ENCODE measurements at regions of chr10 and their contacts with region 1.

Region 1: GRCh38 chr10:121927841-121928527 is at the start of gene ATE1:
- DNase-seq: peak; percentile 62 to 95
- H3K4me3 ChIP-seq: peak within 1 kb of the TSS; percentile 98 to 100
- H3K27ac ChIP-seq: peak within 1 kb of the TSS; percentile 97
- H3K4me1 ChIP-seq: peaks cover 0 to 10% of the 10 kb centered on the region in 2 donors
- H3K27me3 ChIP-seq: no peaks in the 10 kb centered on the region
- CTCF ChIP-seq: no peak
- total RNA-seq, gene ATE1: 6.9 TPM

Region 2: DNA sequence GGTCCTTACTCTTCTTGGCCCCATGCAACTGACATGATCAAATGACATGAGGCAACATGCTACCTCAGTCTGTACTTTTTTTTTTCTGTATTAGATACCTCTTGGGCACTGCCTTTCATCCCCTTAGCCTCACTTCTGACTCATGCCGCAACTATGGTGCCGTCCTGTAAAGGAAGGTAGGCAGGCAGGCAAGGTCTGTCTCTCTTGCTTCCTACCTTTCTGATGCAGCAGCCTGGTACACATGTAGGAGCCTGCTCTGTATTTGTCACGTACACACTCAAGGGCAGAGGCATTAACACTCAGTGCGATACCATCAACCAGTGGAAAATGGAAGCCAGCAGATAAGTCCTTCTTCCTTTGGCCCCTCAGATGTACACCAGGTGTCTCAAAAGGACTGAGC is 146.9 kb before region 1 on chr10:
- intact Hi-C with region 1: no loop called
- DNase-seq: no peak
- H3K4me3 ChIP-seq: no peak overlapping the region
- H3K27ac ChIP-seq: no peak overlapping the region
- H3K4me1 ChIP-seq: no peaks in the 10 kb centered on the region
- H3K27me3 ChIP-seq: no peaks in the 10 kb centered on the region
- CTCF ChIP-seq: no peak

Region 3: GRCh38 chr10:121886997-121887622 is 40.9 kb before region 1 on chr10:
- intact Hi-C with region 1: no loop called
- DNase-seq: no peak
- H3K4me3 ChIP-seq: no peak overlapping the region
- H3K27ac ChIP-seq: no peak overlapping the region
- H3K4me1 ChIP-seq: no peaks in the 10 kb centered on the region
- H3K27me3 ChIP-seq: no peaks in the 10 kb centered on the region
- CTCF ChIP-seq: peak in 2 of 3 experiments; percentile 49 to 60

Region 4: GRCh38 chr10:121947343-121948330 is 19.7 kb after region 1 on chr10:
- intact Hi-C with region 1: no loop called
- DNase-seq: no peak
- H3K4me3 ChIP-seq: no peak overlapping the region
- H3K27ac ChIP-seq: no peak overlapping the region
- H3K4me1 ChIP-seq: peaks cover 0 to 4% of the 10 kb centered on the region in 2 donors
- H3K27me3 ChIP-seq: no peaks in the 10 kb centered on the region
- CTCF ChIP-seq: no peak

Region 5: GRCh38 chr10:121974535-121975294 is 46.7 kb after region 1 on chr10 and contains the start of gene NSMCE4A:
- intact Hi-C with region 1: loop called (anchors 1 kb)
- DNase-seq: peak in 1 of 2 donors; percentile 81
- H3K4me3 ChIP-seq: peak within 1 kb of the TSS; percentile 80 to 95
- H3K27ac ChIP-seq: peak within 1 kb of the TSS; percentile 93 to 96
- H3K4me1 ChIP-seq: peaks cover 0 to 16% of the 10 kb centered on the region in 2 donors
- H3K27me3 ChIP-seq: no peaks in the 10 kb centered on the region
- CTCF ChIP-seq: peak in 2 of 3 experiments; percentile 50 to 52
- total RNA-seq, gene NSMCE4A: 63.3 TPM

Region 6: GRCh38 chr10:121994390-121994961 is 66.5 kb after region 1 on chr10:
- intact Hi-C with region 1: loop called (anchors 5 kb)
- DNase-seq: peak in 1 of 2 donors; percentile 80
- H3K4me3 ChIP-seq: peak overlapping the region in 1 of 2 donors; percentile 55
- H3K27ac ChIP-seq: peak overlapping the region; percentile 83 to 90
- H3K4me1 ChIP-seq: peaks cover 4 to 30% of the 10 kb centered on the region in 2 donors
- H3K27me3 ChIP-seq: no peaks in the 10 kb centered on the region
- CTCF ChIP-seq: peak in 1 of 3 experiments; percentile 24

Region 7: GRCh38 chr10:122044045-122044661 is 116.2 kb after region 1 on chr10:
- intact Hi-C with region 1: loop called (anchors 2 kb)
- DNase-seq: peak in 1 of 2 donors; percentile 81
- H3K4me3 ChIP-seq: peak overlapping the region in 1 of 2 donors; percentile 38
- H3K27ac ChIP-seq: peak overlapping the region; percentile 58 to 72
- H3K4me1 ChIP-seq: peaks cover 0 to 20% of the 10 kb centered on the region in 2 donors
- H3K27me3 ChIP-seq: no peaks in the 10 kb centered on the region
- CTCF ChIP-seq: no peak

Region 8: DNA sequence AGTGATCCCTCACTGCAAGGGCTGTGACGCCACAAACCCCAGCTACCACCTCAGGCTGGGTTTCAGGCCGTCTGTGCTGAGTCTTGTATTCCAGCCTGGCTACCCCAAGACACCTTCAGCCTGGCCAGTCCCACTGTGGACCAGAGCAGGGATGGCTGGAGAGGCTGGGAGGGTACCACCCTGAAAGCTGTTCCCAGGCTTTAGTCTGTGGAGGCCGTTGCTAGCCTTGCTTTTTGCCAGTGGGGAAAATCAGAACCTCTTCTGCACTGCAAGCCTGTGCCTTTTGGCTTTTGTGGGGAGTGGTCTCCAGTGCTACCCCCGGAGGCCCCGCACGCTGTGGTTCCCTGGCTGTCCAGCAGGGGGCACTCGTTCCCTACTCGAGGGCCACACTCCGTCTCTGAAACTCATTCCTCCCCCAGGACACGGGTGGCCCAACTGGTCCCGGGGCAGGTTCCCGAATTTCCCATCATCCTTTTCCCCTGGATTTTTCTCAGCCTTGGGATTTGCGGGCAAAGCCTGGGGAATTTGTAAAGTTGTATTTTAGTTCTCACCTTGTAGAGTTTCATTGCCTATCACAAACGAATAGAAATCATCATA is 214.8 kb after region 1 on chr10:
- intact Hi-C with region 1: loop called (anchors 5 kb)
- DNase-seq: no peak
- H3K4me3 ChIP-seq: no peak overlapping the region
- H3K27ac ChIP-seq: peak overlapping the region; percentile 93 to 95
- H3K4me1 ChIP-seq: peaks cover 28 to 41% of the 10 kb centered on the region in 2 donors
- H3K27me3 ChIP-seq: no peaks in the 10 kb centered on the region
- CTCF ChIP-seq: peak; percentile 82 to 98 (median 89)

Region 9: GRCh38 chr10:122374237-122374869 is 446.4 kb after region 1 on chr10 and contains the start of gene PLEKHA1:
- intact Hi-C with region 1: loop called (anchors 5 kb)
- DNase-seq: peak; percentile 83 to 98
- H3K4me3 ChIP-seq: peak within 1 kb of the TSS; percentile 78 to 95
- H3K27ac ChIP-seq: peak within 1 kb of the TSS; percentile 88 to 99
- H3K4me1 ChIP-seq: peaks cover 0 to 20% of the 10 kb centered on the region in 2 donors
- H3K27me3 ChIP-seq: no peaks in the 10 kb centered on the region
- CTCF ChIP-seq: no peak
- total RNA-seq, gene PLEKHA1: 128 TPM

Region 10: DNA sequence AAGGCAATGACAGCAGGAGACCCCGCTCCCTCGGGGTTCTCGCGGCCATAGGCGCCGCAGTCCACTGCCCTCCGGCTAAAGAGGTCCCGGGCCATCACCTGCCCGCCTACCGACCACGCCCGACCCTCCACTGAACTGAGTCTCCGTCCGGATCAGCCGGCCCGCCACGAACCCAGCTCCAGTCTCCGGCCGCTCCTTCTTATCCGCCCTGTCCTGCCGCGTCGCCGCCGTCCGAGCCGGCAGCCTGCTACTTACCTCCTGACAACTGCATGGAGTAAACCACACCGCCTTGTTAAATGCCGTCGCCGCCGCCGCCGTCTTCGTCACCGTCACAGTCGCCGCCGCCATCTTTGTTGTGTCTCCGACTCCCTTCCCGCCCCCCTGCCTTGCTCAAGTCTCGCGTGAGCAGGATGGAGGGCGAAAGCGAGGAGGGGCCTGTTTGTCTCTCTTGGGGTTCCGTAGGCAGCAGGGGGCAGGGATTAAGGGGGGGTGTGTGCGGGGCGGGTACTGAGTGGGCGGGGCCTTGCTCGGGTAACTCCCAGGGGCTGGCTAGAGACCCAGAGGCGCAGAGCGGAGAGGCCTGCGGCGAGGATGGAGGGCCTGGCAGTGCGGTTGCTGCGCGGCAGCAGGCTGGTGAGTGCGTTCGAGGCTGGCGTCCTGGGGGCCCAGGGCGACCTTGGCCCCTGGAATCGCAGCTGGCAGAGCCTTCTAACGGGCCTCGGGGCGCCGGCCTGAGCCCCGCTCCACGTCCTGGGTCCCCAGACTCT is 1080.6 kb after region 1 on chr10 and contains the starts of genes ACADSB and IKZF5:
- intact Hi-C with region 1: loop called (anchors 5 kb)
- DNase-seq: peak; percentile 93 to 99
- H3K4me3 ChIP-seq: peak within 1 kb of the TSS; percentile 75 to 98
- H3K27ac ChIP-seq: peak within 1 kb of the TSS; percentile 89 to 95
- H3K4me1 ChIP-seq: peaks cover 3 to 15% of the 10 kb centered on the region in 2 donors
- H3K27me3 ChIP-seq: no peaks in the 10 kb centered on the region
- CTCF ChIP-seq: no peak
- total RNA-seq, gene ACADSB: 1.8 TPM
- total RNA-seq, gene IKZF5: 4.3 TPM